Dendritic cell treated with granulocyte-macrophage colony-stimulating factor and Interleukin-4, amounts not matched to agents 40 ng/mL and 50 ng/mL, for 4 days (primary cell): ENCODE measurements at regions of chr2 and their contacts with region 1.

Region 1: GRCh38 chr2:45570671-45571334 is 40.3 kb downstream of the SRBD1 start:
- H3K4me3 Mint-ChIP-seq: no peak overlapping the region
- H3K27ac Mint-ChIP-seq: no peak overlapping the region
- H3K4me1 Mint-ChIP-seq: peaks cover 25% of the 10 kb centered on the region
- H3K27me3 Mint-ChIP-seq: no peaks in the 10 kb centered on the region

Region 2: DNA sequence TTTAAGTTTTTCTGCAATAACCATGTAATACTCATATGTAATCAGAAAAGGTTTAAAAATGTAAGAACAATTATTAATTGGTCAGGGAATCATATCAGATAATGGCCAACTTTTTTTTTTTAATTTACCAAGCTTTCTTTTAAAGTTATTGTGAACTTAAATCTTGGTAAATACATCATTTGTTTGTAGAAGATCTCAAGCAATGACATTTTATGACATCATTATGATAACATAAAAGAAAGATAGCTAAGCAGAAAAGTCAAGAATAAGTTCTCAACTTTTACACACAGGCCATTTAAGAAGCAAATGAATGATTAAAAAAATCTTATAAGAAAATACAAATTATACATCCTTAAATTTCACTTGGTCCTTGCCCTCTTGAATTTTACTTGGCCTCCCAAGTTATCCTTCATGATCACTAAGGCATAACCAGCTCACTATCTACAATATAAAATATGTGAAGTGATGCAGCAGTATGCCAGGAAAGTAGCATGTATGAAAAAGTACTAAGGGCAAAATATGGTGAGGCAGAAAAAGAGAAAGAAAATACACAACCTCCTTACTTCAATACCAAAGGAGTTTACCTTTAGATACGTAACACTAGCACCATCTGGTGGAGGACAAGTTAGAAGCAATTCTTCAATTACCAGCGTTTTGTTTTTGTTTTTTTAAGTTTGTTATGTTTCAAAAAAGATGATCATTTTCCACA is 76.4 kb before region 1 on chr2:
- intact Hi-C with region 1: loop called (anchors 5 kb)
- H3K4me3 Mint-ChIP-seq: no peak overlapping the region
- H3K27ac Mint-ChIP-seq: no peak overlapping the region
- H3K4me1 Mint-ChIP-seq: peaks cover 8% of the 10 kb centered on the region
- H3K27me3 Mint-ChIP-seq: no peaks in the 10 kb centered on the region

Region 3: DNA sequence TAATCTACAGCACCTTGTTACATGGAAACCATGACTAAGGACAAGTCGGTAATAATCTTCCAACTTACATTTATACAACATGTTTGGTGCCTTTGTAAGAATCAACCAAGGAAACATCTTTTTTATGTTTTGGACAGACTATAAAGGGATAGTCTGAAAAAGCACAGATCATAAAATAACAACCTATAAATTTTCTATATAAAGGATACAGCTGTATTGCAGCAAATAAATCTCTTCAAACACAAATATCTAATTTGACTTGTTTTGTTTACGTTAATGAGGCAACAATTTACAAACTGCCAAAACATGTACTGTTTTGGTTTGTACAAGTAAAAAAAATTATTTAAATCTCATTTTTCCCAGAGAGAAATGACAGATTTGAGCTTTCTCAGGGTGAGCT is 52.3 kb before region 1 on chr2:
- intact Hi-C with region 1: no loop called
- H3K4me3 Mint-ChIP-seq: no peak overlapping the region
- H3K27ac Mint-ChIP-seq: no peak overlapping the region
- H3K4me1 Mint-ChIP-seq: no peaks in the 10 kb centered on the region
- H3K27me3 Mint-ChIP-seq: no peaks in the 10 kb centered on the region

Region 4: DNA sequence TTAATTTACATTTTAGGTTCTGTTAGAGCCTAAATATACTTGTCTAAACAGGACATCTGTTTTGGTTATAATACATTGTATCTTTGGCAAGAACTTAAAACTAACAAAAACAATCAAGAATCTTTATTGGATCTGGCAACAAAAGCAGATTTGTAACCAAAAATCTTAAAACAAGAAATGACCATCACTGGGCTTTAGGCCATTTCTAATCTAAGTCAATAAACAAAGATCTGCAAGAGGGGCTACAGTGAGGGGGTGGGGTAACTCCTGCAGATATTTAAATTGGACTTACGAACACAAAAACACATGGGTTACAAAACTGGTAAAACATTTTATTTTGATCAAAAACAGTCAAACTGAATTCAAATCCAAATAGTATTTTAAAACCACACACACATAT is 37.0 kb before region 1 on chr2:
- intact Hi-C with region 1: no loop called
- H3K4me3 Mint-ChIP-seq: no peak overlapping the region
- H3K27ac Mint-ChIP-seq: no peak overlapping the region
- H3K4me1 Mint-ChIP-seq: no peaks in the 10 kb centered on the region
- H3K27me3 Mint-ChIP-seq: no peaks in the 10 kb centered on the region